Right ventricle myocardium superior (tissue), 1 donor: ENCODE measurements at regions of chr5 and their contacts with region 1.

Region 1: GRCh38 chr5:66436721-66437120 is 159.5 kb upstream of the MAST4 start:
- DNase-seq: no peak
- ATAC-seq: peak; percentile 42

Region 2: DNA sequence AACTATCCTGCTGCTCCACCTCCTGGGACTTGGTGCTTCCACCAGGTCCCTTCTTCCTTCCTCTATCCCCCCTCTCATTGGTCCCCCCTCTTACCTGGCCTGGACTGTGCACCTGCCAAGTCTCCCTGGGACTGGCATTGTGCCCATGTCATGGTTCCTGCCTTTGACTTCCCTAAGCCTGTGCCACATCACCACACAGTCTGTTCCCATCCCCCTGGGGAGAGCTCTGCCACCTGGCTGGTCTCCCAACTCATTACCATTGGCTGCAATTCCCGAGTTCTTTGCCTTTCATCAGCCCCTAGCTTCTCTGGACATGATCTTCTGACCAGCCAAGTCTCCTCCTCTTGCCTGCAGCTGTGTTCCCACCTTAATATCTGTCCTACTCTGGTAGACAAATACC is 112.4 kb before region 1 on chr5:
- intact Hi-C with region 1: loop called (anchors 10 kb)
- DNase-seq: peak; percentile 68
- ATAC-seq: peak; percentile 73